ENCODE measurements at regions of chr14 and their contacts with region 1.

Region 1: GRCh38 chr14:90697577-90698206 is 118.5 kb downstream of the TTC7B start:
- DNase-seq: peak; percentile 63 to 71 (median 71)
- H3K4me3 ChIP-seq: no peak overlapping the region
- H3K4me3 Mint-ChIP-seq: peak overlapping the region in 1 of 8 donors; percentile 52
- H3K27ac ChIP-seq: no peak overlapping the region
- H3K27ac Mint-ChIP-seq: no peak overlapping the region
- H3K4me1 ChIP-seq: no peaks in the 10 kb centered on the region
- H3K4me1 Mint-ChIP-seq: peaks cover 0 to 2% (median 0%) of the 10 kb centered on the region in 4 donors
- H3K27me3 ChIP-seq: no peaks in the 10 kb centered on the region
- H3K27me3 Mint-ChIP-seq: peaks cover 0 to 1% of the 10 kb centered on the region in 2 donors

Region 2: DNA sequence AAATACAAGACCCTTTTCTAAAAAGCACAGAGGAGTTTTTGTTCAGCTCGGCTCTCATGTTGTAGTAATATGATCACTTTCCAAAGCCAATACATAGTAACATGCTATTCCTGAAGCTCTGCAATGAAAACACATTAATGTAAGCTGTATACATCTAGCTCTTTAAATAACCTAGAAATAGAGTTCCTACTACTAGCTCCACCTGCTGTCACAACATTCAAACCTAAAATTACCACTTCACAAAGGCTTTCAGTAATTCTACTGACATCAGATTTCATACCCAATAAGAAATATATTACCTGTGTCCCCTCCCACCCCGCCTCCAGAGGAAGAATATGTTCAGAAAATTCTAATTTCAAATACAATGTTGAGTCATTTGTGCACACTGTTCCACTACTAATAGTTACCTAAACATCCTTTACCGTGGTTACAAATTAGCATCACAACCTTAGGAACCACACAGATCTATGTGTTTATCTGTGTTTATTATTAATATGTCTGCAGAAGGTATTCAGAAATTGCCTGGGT is 761.0 kb before region 1 on chr14:
- CTCF ChIA-PET with region 1: interaction called, 5 read pairs
- POLR2A ChIA-PET with region 1: no interaction called
- intact Hi-C with region 1: loop called (anchors 1 kb)
- DNase-seq: no peak
- H3K4me3 ChIP-seq: no peak overlapping the region
- H3K4me3 Mint-ChIP-seq: no peak overlapping the region
- H3K27ac ChIP-seq: no peak overlapping the region
- H3K27ac Mint-ChIP-seq: no peak overlapping the region
- H3K4me1 ChIP-seq: no peaks in the 10 kb centered on the region
- H3K4me1 Mint-ChIP-seq: peaks cover 0 to 1% (median 0%) of the 10 kb centered on the region in 4 donors
- H3K27me3 ChIP-seq: no peaks in the 10 kb centered on the region
- H3K27me3 Mint-ChIP-seq: no peaks in the 10 kb centered on the region

Region 3: DNA sequence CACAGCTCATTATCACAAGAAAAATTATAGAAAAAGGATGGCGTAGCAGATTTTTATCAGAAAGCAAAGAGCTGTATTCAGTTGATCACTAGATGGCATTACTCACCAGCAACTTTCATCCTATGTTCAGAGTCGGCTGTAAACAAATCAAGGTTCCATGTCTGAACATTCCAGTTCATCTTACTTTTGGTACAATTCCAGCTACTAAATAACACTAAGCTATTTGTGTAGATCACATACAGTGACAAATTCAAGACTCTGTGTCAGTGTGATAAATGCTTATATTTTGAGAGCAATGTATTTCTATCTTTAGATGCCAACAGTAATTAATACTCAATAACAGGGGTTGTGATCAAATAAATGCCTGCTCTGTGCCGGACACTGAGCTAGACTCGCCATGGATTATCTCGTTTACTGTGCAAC is 396.0 kb before region 1 on chr14:
- CTCF ChIA-PET with region 1: interaction called, 42 read pairs
- POLR2A ChIA-PET with region 1: no interaction called
- intact Hi-C with region 1: no loop called
- DNase-seq: peak in 1 of 5 donors; percentile 18
- H3K4me3 ChIP-seq: no peak overlapping the region
- H3K4me3 Mint-ChIP-seq: no peak overlapping the region
- H3K27ac ChIP-seq: no peak overlapping the region
- H3K27ac Mint-ChIP-seq: peak overlapping the region in 4 of 7 donors; percentile 0 to 84 (median 48)
- H3K4me1 ChIP-seq: no peaks in the 10 kb centered on the region
- H3K4me1 Mint-ChIP-seq: peaks cover 11 to 22% (median 15%) of the 10 kb centered on the region in 4 donors
- H3K27me3 ChIP-seq: no peaks in the 10 kb centered on the region
- H3K27me3 Mint-ChIP-seq: no peaks in the 10 kb centered on the region

Region 4: DNA sequence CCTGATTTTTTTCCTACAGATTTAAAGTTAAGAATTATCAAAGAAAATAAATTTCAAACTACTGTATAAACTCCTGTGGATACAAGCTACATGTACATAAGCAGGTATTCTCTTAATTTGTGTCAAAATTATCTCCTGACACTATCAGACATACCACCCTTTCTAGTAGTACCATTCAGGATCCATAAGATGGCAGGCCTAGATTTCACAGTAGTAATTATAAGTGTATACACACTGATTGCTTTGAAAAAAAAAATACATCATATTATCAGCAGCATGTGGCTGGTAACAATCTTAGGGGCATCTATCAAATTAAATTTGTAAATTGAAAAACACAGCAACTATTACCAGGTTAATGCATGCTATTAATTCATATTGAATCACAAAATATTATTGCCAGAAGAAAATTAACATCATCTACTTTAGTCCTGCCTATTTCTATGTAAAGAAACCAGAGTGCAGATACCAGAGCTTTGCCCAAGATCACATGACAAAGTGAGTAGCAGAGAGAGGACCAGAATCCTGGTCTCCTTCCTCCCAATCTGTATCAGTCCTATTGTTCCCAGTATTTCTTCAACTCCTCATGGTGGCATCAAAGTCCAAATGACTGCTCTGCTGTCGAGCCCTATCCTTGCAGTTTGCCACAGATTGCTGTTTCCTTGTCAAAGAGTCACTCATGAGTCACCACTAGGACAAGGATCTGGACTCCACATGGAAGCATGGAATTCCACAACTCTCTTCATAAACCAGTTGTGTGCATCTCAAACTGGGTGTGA is 328.6 kb before region 1 on chr14:
- CTCF ChIA-PET with region 1: interaction called, 62 read pairs
- POLR2A ChIA-PET with region 1: no interaction called
- intact Hi-C with region 1: no loop called
- DNase-seq: peak in 4 of 5 donors; percentile 43 to 51 (median 44)
- H3K4me3 ChIP-seq: no peak overlapping the region
- H3K4me3 Mint-ChIP-seq: no peak overlapping the region
- H3K27ac ChIP-seq: no peak overlapping the region
- H3K27ac Mint-ChIP-seq: no peak overlapping the region
- H3K4me1 ChIP-seq: no peaks in the 10 kb centered on the region
- H3K4me1 Mint-ChIP-seq: peaks cover 0 to 2% (median 1%) of the 10 kb centered on the region in 4 donors
- H3K27me3 ChIP-seq: no peaks in the 10 kb centered on the region
- H3K27me3 Mint-ChIP-seq: no peaks in the 10 kb centered on the region

Region 5: DNA sequence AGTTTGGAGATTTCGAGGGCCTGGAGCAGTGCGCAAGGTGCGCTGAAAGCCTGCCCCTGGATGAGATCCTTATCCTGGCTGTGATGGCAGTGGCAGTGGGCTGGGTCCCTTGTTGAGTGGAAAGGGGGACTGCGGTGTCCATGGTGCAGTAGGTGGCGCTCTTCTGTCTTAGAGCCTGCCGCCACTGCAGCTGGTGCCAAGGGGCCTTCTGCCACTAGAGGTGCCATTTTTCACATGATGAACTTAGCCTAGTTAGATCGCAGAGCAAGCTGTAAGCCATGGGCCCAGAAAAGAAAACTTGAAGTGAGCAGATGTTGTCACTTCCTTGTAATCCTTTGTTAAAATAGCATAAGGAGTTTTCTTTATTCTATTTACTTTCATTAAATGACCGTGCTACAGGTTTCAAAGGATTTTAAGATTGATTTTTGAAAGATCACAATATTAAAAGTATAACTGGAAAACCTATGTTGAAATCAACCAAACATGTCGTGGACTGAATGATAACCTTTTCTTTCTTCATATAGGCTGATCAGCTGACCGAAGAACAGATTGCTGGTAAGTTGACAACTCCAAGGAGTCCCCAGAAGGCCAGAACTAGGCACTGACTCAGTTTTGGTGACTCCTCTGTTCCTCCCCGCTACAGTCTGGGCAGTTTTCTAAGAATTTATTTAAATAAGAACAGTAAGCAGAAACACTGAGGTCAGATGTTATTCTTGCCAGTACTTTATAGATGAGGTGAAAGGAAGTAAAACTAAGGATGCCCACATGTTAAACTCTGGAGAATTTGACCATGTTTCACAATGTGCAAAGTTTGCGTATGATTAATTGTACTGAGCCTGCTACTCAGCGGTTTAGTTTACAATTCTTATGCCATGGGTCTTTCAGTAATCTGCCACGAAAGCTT is 297.9 kb before region 1 on chr14:
- CTCF ChIA-PET with region 1: interaction called, 13 read pairs
- POLR2A ChIA-PET with region 1: interaction called, 6 read pairs
- intact Hi-C with region 1: loop called (anchors 1 kb)
- DNase-seq: peak; percentile 83 to 91 (median 87)
- H3K4me3 ChIP-seq: peak overlapping the region; percentile 71 to 88
- H3K4me3 Mint-ChIP-seq: peak overlapping the region; percentile 95 to 99 (median 98)
- H3K27ac ChIP-seq: peak overlapping the region; percentile 87
- H3K27ac Mint-ChIP-seq: peak overlapping the region; percentile 98 to 99 (median 99)
- H3K4me1 ChIP-seq: peaks cover 59% of the 10 kb centered on the region
- H3K4me1 Mint-ChIP-seq: peaks cover 34 to 70% (median 53%) of the 10 kb centered on the region in 4 donors
- H3K27me3 ChIP-seq: no peaks in the 10 kb centered on the region
- H3K27me3 Mint-ChIP-seq: peaks cover 0 to 5% of the 10 kb centered on the region in 2 donors

Region 6: GRCh38 chr14:91606851-91607250 is 909.2 kb after region 1 on chr14:
- CTCF ChIA-PET with region 1: no interaction called
- POLR2A ChIA-PET with region 1: no interaction called
- intact Hi-C with region 1: no loop called
- DNase-seq: no peak
- H3K4me3 ChIP-seq: no peak overlapping the region
- H3K4me3 Mint-ChIP-seq: no peak overlapping the region
- H3K27ac ChIP-seq: no peak overlapping the region
- H3K27ac Mint-ChIP-seq: no peak overlapping the region
- H3K4me1 ChIP-seq: no peaks in the 10 kb centered on the region
- H3K4me1 Mint-ChIP-seq: no peaks in the 10 kb centered on the region
- H3K27me3 ChIP-seq: no peaks in the 10 kb centered on the region
- H3K27me3 Mint-ChIP-seq: no peaks in the 10 kb centered on the region

Measured in CD4-positive, alpha-beta memory T cell (primary cell).